Activated naive CD4-positive, alpha-beta T cell treated with anti-CD3 and anti-CD28 coated beads for 36 hours (primary cell): ENCODE measurements at regions of chr1 and their contacts with region 1.

Region 1: GRCh38 chr1:65148548-65149350 is 746 bp downstream of the AK4 start:
- DNase-seq: peak; percentile 41
- H3K4me3 Mint-ChIP-seq: peak overlapping the region; percentile 80
- H3K27ac Mint-ChIP-seq: no peak overlapping the region
- H3K4me1 Mint-ChIP-seq: peaks cover 10% of the 10 kb centered on the region
- H3K27me3 Mint-ChIP-seq: peaks cover 47% of the 10 kb centered on the region

Region 2: DNA sequence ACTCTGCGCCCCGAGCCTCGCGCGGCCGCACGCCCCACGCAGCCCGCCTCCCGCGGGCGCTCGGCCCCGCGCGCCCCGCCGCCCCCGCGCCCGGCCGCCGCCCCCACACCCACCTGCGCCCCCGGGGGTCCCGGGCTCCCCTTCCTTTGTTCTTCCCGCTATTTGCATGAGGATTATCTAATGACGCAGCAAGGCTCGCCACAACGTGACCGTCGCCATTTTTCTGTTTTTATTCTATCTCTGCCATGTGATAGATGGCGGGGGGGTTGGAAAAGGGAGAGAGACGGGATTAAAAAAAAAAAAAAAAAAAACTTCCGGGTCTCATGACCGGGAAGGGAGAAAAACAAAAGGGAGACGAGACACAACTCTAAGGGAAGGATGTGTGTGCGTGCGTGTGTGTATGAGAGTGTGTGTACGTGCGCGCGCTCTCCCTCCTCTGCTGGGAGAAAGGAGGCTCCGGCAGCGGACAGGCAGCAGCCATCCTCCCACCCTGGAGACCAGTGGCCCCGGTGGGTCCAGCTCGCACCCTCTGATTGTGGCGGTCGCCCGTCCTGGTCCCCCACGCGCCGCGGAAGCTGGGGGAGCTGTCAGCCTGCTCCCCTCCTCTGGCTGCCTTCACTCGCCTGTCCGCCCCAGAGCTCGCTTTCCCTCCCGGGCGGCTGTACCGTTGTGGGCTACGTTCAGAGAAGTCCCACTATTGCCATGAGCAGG is 81.1 kb before region 1 on chr1:
- CTCF ChIA-PET with region 1: no interaction called
- intact Hi-C with region 1: loop called (anchors 1 kb)
- DNase-seq: peak; percentile 71
- H3K4me3 Mint-ChIP-seq: peak overlapping the region; percentile 87
- H3K27ac Mint-ChIP-seq: peak overlapping the region; percentile 95
- H3K4me1 Mint-ChIP-seq: peaks cover 51% of the 10 kb centered on the region
- H3K27me3 Mint-ChIP-seq: no peaks in the 10 kb centered on the region

Region 3: DNA sequence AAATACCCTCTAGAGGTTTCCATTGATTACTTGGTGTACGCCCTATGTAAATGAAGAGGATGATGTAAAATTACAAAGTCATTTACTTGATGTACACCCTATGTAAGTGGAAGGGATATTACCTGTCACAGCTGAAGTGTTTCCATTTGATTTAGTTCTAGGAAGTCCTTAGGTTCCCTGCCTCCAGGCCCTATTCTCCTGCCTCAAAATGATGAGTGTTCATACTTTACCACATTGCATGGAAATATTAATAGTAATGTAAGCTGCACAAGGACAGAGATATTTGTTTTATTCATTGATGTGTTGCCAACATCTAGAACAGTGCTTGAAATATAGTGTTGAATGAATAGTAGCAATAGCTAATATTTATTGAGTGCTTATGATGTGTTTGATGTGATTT is 10.2 kb before region 1 on chr1:
- CTCF ChIA-PET with region 1: no interaction called
- intact Hi-C with region 1: no loop called
- DNase-seq: no peak
- H3K4me3 Mint-ChIP-seq: no peak overlapping the region
- H3K27ac Mint-ChIP-seq: no peak overlapping the region
- H3K4me1 Mint-ChIP-seq: no peaks in the 10 kb centered on the region
- H3K27me3 Mint-ChIP-seq: peaks cover 5% of the 10 kb centered on the region

Region 4: GRCh38 chr1:65163201-65163805 is 14.6 kb after region 1 on chr1:
- CTCF ChIA-PET with region 1: no interaction called
- intact Hi-C with region 1: no loop called
- DNase-seq: no peak
- H3K4me3 Mint-ChIP-seq: no peak overlapping the region
- H3K27ac Mint-ChIP-seq: no peak overlapping the region
- H3K4me1 Mint-ChIP-seq: peaks cover 6% of the 10 kb centered on the region
- H3K27me3 Mint-ChIP-seq: peaks cover 8% of the 10 kb centered on the region